WTC11 (cell line): ENCODE measurements at regions of chr5 and their contacts with region 1.

Region 1: GRCh38 chr5:29169886-29170285 is 2023.6 kb upstream of the CDH6 start:
- DNase-seq: no peak
- ATAC-seq: no peak
- H3K4me3 Mint-ChIP-seq: no peak overlapping the region
- H3K27ac Mint-ChIP-seq: no peak overlapping the region
- H3K4me1 Mint-ChIP-seq: peaks cover 14% of the 10 kb centered on the region
- H3K27me3 Mint-ChIP-seq: no peaks in the 10 kb centered on the region
- CTCF ChIP-seq: no peak

Region 2: GRCh38 chr5:29099585-29099984 is 70.3 kb before region 1 on chr5:
- CTCF ChIA-PET with region 1: no interaction called
- POLR2A ChIA-PET with region 1: interaction called, 10 read pairs
- DNase-seq: no peak
- ATAC-seq: no peak
- H3K4me3 Mint-ChIP-seq: no peak overlapping the region
- H3K27ac Mint-ChIP-seq: no peak overlapping the region
- H3K4me1 Mint-ChIP-seq: peaks cover 6% of the 10 kb centered on the region
- H3K27me3 Mint-ChIP-seq: no peaks in the 10 kb centered on the region; the same call in 1 of the 2 replicates
- CTCF ChIP-seq: no peak

Region 3: GRCh38 chr5:29150840-29151239 is 19.0 kb before region 1 on chr5:
- CTCF ChIA-PET with region 1: no interaction called
- POLR2A ChIA-PET with region 1: no interaction called
- DNase-seq: no peak
- ATAC-seq: peak; percentile 98
- H3K4me3 Mint-ChIP-seq: no peak overlapping the region
- H3K27ac Mint-ChIP-seq: peak overlapping the region; percentile 92
- H3K4me1 Mint-ChIP-seq: peaks cover 32% of the 10 kb centered on the region
- H3K27me3 Mint-ChIP-seq: no peaks in the 10 kb centered on the region
- CTCF ChIP-seq: no peak

Region 4: GRCh38 chr5:29185558-29185957 is 15.7 kb after region 1 on chr5:
- CTCF ChIA-PET with region 1: no interaction called
- POLR2A ChIA-PET with region 1: no interaction called
- DNase-seq: no peak
- ATAC-seq: no peak
- H3K4me3 Mint-ChIP-seq: no peak overlapping the region
- H3K27ac Mint-ChIP-seq: no peak overlapping the region
- H3K4me1 Mint-ChIP-seq: no peaks in the 10 kb centered on the region
- H3K27me3 Mint-ChIP-seq: no peaks in the 10 kb centered on the region
- CTCF ChIP-seq: no peak

Region 5: GRCh38 chr5:29238115-29238514 is 68.2 kb after region 1 on chr5:
- CTCF ChIA-PET with region 1: no interaction called
- POLR2A ChIA-PET with region 1: no interaction called
- DNase-seq: no peak
- ATAC-seq: peak; percentile 78
- H3K4me3 Mint-ChIP-seq: peak overlapping the region; percentile 10; the same call in 1 of the 2 replicates
- H3K27ac Mint-ChIP-seq: peak overlapping the region; percentile 92
- H3K4me1 Mint-ChIP-seq: peaks cover 39% of the 10 kb centered on the region
- H3K27me3 Mint-ChIP-seq: no peaks in the 10 kb centered on the region
- CTCF ChIP-seq: no peak